ENCODE measurements at regions of chr7 and their contacts with region 1.

Region 1: DNA sequence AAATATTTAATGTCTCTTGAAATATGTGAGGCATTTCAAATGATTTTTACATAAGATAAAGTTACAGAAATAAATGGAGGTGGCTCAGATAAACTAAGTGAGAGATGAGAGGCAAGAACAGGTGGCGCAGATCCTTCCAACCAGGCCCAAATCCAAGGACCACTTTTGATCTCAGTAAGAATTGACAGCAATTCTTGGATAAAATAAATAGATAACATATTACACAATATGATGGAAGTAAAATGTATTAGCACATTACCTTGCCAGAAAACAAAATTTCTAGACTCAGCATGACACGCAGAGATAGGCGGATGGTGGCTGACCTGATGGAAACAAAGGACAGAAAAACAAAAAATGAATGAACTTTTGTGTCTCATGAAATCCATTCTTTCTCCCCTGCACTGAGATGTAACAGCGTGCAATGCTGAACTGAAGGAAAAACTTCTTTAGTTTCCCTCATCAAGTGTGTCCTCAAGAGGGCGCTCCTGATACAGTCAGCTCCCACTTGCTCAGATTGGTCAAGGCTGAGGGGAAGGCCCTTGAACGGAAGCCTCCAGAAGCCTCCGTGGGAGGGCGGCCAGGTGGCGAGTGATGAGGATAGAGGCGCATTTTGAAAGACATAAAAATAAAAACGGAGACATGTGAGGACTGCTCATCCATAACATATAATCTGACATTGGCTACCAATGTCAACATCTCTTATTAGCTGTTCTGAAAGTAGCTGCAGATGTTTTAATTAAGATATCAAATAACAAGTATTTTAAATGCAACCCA is 62.8 kb upstream of the GSDME start:
- DNase-seq: peak; percentile 86
- H3K4me3 ChIP-seq: no peak overlapping the region
- H3K27ac ChIP-seq: peak overlapping the region; percentile 72 to 81 (median 78)
- H3K4me1 ChIP-seq: peaks cover 8 to 22% (median 14%) of the 10 kb centered on the region in 4 donors
- H3K27me3 ChIP-seq: no peaks in the 10 kb centered on the region
- CTCF ChIP-seq: peak; percentile 78 to 88 (median 84)
- EP300 ChIP-seq: no peak
- POLR2A ChIP-seq: no peak

Region 2: DNA sequence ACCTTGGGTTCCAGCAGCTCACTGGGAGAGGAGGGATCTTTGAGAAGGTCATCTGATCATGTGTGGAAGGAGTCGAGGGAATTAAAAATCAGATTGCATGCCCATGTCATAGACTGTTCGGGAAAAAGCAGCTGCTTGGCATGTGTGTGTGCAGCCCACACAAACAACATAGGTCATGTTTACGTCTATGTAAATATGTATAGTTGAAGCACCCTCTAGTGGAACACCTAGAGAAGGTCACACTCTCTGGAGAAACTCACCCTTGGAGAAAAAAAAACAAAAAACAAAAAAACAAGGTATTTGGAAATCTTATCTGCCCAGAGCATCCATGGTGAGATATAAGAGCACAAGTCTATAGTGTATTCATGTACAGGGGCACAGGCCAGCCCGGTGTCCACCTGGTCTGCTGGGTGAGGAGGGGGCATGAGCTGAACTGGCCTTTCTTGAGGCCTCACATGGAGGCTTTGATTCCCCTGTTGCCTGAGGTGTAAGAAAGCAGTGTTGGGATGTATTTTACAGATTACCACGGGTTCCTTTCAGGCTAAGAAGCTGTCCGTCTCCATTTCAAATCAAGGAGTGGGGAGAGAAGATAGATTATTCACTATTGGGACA is 438.1 kb before region 1 on chr7:
- in situ Hi-C with region 1: no loop called
- intact Hi-C with region 1: no loop called
- DNase-seq: no peak
- H3K4me3 ChIP-seq: no peak overlapping the region
- H3K27ac ChIP-seq: no peak overlapping the region
- H3K4me1 ChIP-seq: no peaks in the 10 kb centered on the region
- H3K27me3 ChIP-seq: no peaks in the 10 kb centered on the region
- CTCF ChIP-seq: peak in 4 of 5 experiments; percentile 14 to 44 (median 41)
- EP300 ChIP-seq: no peak
- POLR2A ChIP-seq: no peak

Region 3: GRCh38 chr7:24685708-24686107 is 134.4 kb before region 1 on chr7:
- in situ Hi-C with region 1: no loop called
- intact Hi-C with region 1: no loop called
- DNase-seq: no peak
- H3K4me3 ChIP-seq: no peak overlapping the region
- H3K27ac ChIP-seq: no peak overlapping the region
- H3K4me1 ChIP-seq: no peaks in the 10 kb centered on the region
- H3K27me3 ChIP-seq: no peaks in the 10 kb centered on the region
- CTCF ChIP-seq: no peak
- EP300 ChIP-seq: no peak
- POLR2A ChIP-seq: no peak

Region 4: GRCh38 chr7:24979863-24980533 is 159.9 kb after region 1 on chr7 and contains the start of gene OSBPL3:
- in situ Hi-C with region 1: loop called in 3 of 4 experiments (anchors 10 kb)
- intact Hi-C with region 1: loop called (anchors 10 kb)
- DNase-seq: peak; percentile 97
- H3K4me3 ChIP-seq: peak within 1 kb of the TSS; percentile 77 to 98 (median 86)
- H3K27ac ChIP-seq: peak within 1 kb of the TSS; percentile 86 to 90 (median 89)
- H3K4me1 ChIP-seq: peaks cover 0 to 30% (median 17%) of the 10 kb centered on the region in 4 donors
- H3K27me3 ChIP-seq: no peaks in the 10 kb centered on the region
- CTCF ChIP-seq: no peak
- EP300 ChIP-seq: no peak
- POLR2A ChIP-seq: peak; percentile 71
- total RNA-seq, gene OSBPL3: 6.7 to 20.6 (median 8.0) TPM

Region 5: DNA sequence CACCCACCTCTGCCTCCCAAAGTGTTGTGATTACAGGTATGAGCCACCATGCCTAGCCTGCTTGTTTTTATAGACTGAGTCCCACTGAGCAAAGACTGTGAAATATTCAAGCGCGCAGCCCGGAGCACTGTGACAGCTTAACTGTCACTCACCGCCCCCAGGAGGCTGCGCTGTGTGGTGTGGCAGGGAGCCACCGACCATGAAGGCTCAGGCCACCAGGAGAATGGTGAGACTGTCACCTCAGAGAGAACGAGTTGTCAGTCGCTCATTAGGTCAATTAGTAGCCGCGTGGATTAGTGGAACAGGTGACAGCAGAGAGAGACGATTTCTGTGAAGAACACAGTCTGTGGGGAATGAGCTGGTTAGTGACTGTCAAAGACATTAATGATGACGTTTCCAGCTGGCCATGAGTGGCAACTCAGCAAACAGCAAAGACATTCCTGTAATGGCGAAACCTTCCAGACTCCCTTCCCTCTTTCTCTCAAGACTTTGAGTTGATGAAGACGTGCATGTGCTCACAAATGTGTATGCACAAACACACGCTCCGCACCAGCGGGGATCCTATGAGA is 240.5 kb after region 1 on chr7:
- in situ Hi-C with region 1: loop called in 1 of 4 experiments (anchors 10 kb)
- intact Hi-C with region 1: loop called (anchors 5 kb)
- DNase-seq: no peak
- H3K4me3 ChIP-seq: no peak overlapping the region
- H3K27ac ChIP-seq: no peak overlapping the region
- H3K4me1 ChIP-seq: no peaks in the 10 kb centered on the region
- H3K27me3 ChIP-seq: no peaks in the 10 kb centered on the region
- CTCF ChIP-seq: no peak
- EP300 ChIP-seq: no peak
- POLR2A ChIP-seq: no peak

Region 6: DNA sequence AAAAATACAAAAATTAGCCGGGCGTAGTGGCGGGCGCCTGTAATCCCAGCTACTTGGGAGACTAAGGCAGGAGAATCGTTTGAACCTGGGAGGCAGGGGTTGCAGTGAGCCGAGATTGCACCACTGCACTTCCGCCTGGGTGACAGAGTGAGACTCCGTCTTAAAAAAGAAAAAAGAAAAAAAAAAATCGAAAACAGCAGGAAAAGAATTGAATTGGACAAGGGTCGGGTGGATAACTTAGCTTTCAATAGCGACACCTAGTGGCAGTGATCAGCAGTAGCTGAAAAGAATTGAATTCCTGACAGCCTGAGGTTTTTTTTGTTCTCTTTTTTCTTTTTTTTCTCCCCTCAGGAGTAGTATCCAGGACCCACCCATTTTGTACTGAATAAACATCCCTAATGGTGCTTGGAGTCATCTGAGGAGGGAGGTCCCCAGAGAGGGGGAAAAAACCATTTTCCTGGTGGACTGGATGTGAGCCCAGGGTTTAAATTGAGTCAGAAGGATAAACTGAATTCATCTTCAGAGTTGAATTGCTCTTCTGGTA is 249.9 kb after region 1 on chr7:
- in situ Hi-C with region 1: loop called (anchors 5 to 10 kb)
- intact Hi-C with region 1: loop called (anchors 2 kb)
- DNase-seq: peak; percentile 39
- H3K4me3 ChIP-seq: peak overlapping the region in 3 of 4 donors; percentile 22 to 47 (median 24)
- H3K27ac ChIP-seq: no peak overlapping the region
- H3K4me1 ChIP-seq: peaks cover 0 to 11% (median 3%) of the 10 kb centered on the region in 4 donors
- H3K27me3 ChIP-seq: no peaks in the 10 kb centered on the region
- CTCF ChIP-seq: peak; percentile 86 to 96 (median 89)
- EP300 ChIP-seq: no peak
- POLR2A ChIP-seq: no peak

Region 7: GRCh38 chr7:25075459-25075858 is 255.4 kb after region 1 on chr7:
- in situ Hi-C with region 1: loop called in 3 of 4 experiments (anchors 5 kb)
- intact Hi-C with region 1: loop called (anchors 2 kb)
- DNase-seq: no peak
- H3K4me3 ChIP-seq: no peak overlapping the region
- H3K27ac ChIP-seq: no peak overlapping the region
- H3K4me1 ChIP-seq: no peaks in the 10 kb centered on the region
- H3K27me3 ChIP-seq: no peaks in the 10 kb centered on the region
- CTCF ChIP-seq: no peak
- EP300 ChIP-seq: no peak
- POLR2A ChIP-seq: no peak

Region 8: DNA sequence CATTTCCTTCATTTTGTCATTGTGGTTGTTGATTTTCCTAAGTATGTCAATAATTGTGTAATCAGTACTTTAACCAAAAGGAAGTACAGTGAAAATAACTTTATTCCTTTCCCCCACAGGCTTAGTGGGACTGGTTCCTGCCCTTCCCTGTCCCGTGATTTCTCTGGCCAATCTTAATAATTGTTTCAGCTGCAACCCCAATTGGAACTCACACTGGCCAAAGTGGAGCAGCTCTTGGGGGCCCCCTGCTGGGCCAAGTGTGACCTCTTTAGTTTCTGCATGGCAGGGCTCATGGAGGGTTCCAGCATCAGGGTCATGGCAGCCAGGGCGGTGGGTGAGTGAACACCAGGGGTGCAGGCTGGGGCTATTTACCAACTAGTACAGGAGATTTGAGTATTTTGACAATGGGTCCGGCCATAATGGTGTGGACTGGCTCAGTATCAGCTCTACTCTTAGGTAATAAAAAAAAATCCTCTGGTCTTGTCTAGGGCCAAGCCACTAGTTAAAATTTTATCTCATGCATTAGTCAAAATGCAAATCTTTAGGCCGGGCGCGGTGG is 273.2 kb after region 1 on chr7:
- in situ Hi-C with region 1: loop called in 1 of 4 experiments (anchors 10 kb)
- intact Hi-C with region 1: no loop called
- DNase-seq: peak; percentile 82
- H3K4me3 ChIP-seq: no peak overlapping the region
- H3K27ac ChIP-seq: no peak overlapping the region
- H3K4me1 ChIP-seq: peaks cover 0 to 4% (median 0%) of the 10 kb centered on the region in 4 donors
- H3K27me3 ChIP-seq: no peaks in the 10 kb centered on the region
- CTCF ChIP-seq: peak; percentile 57 to 79 (median 68)
- EP300 ChIP-seq: no peak
- POLR2A ChIP-seq: no peak

Region 9: GRCh38 chr7:25279705-25280104 is 459.6 kb after region 1 on chr7:
- in situ Hi-C with region 1: no loop called
- intact Hi-C with region 1: loop called (anchors 5 kb)
- DNase-seq: no peak
- H3K4me3 ChIP-seq: no peak overlapping the region
- H3K27ac ChIP-seq: no peak overlapping the region
- H3K4me1 ChIP-seq: peaks cover 0 to 12% (median 7%) of the 10 kb centered on the region in 4 donors
- H3K27me3 ChIP-seq: no peaks in the 10 kb centered on the region
- CTCF ChIP-seq: no peak
- EP300 ChIP-seq: no peak
- POLR2A ChIP-seq: no peak